ENCODE measurements at regions of chrX and their contacts with region 1.

Region 1: DNA sequence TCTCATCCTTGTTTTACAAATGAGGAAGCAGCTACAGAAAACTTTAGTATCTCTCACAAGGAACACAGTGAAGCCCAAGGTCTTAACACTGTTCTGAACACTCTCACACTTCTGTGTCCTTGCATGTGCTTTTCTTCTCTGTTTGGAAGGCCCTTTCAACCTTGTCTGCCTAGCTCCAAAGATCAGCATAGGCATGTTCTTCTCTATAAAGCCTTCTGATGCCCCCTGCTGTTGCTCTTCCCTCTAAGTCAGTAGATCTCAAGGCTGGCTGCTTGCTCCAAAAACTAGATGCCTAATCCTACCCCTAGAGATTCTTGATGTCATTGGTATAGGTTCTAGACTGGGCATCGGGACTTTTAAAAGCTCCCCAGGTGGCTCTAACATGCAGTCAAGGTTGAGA is 5.9 kb downstream of the APOO start:
- DNase-seq: no peak
- ATAC-seq: peak; percentile 87
- H3K4me3 Mint-ChIP-seq: no peak overlapping the region
- H3K27ac Mint-ChIP-seq: no peak overlapping the region
- H3K4me1 Mint-ChIP-seq: peaks cover 4% of the 10 kb centered on the region
- H3K27me3 Mint-ChIP-seq: no peaks in the 10 kb centered on the region
- CTCF ChIP-seq: no peak

Region 2: GRCh38 chrX:22135994-22136684 is 1765.7 kb before region 1 on chrX:
- CTCF ChIA-PET with region 1: interaction called, 6 read pairs
- POLR2A ChIA-PET with region 1: no interaction called
- intact Hi-C with region 1: loop called (anchors 2 kb)
- DNase-seq: no peak
- ATAC-seq: no peak
- H3K4me3 Mint-ChIP-seq: no peak overlapping the region
- H3K27ac Mint-ChIP-seq: no peak overlapping the region
- H3K4me1 Mint-ChIP-seq: peaks cover 4% of the 10 kb centered on the region
- H3K27me3 Mint-ChIP-seq: no peaks in the 10 kb centered on the region
- CTCF ChIP-seq: no peak

Region 3: DNA sequence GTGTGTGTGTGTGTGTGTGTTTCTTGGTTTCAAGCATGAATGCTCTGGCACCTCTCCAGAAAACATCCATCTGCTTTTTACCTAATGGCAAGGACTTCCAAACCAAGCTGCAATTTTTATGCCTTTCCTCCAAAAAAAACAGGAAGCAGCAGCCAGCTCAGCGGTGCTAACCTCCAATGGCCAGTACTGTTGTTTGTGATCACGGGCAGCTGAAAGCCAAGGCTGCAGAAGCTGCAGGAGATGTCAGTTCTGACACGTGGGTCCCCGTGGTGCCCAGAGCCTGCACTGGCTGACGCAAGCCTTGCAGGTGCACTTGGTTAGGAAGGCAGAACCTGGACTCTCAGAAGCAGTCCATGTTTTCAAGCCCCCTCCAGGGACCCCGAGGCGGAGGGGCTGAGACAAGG is 1215.7 kb before region 1 on chrX:
- CTCF ChIA-PET with region 1: no interaction called
- POLR2A ChIA-PET with region 1: no interaction called
- intact Hi-C with region 1: no loop called
- DNase-seq: no peak
- ATAC-seq: no peak
- H3K4me3 Mint-ChIP-seq: no peak overlapping the region
- H3K27ac Mint-ChIP-seq: no peak overlapping the region
- H3K4me1 Mint-ChIP-seq: peaks cover 8% of the 10 kb centered on the region
- H3K27me3 Mint-ChIP-seq: no peaks in the 10 kb centered on the region
- CTCF ChIP-seq: no peak

Region 4: DNA sequence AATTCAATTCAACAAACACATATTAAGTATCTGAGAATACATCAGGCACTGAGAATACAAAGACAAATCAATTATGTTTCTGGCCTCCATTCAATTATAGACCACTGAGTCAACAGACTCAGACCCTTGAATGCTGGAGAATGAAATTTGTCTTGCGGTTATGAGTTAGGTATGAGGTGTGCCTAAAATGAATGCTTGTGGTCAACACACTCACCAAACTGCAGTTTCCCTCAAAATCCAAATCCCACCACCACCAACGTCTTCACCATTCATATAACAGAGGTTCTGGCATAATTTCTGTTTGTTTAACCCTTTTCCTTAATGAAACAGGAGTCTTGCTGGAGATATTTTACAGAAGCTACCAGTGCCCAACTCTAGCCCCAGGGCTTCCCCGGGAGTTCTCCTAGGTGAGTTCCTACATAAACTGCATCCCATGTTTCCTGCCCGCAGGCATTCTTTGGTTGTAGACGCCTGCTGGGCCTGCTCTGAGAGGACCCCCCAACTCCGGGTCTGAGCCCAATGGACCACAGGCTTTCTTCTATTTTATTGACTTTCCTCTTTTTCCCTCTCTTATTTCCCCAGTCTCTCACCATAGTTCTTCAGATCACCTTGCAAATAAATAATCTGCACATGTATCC is 782.8 kb before region 1 on chrX:
- CTCF ChIA-PET with region 1: no interaction called
- POLR2A ChIA-PET with region 1: no interaction called
- intact Hi-C with region 1: no loop called
- DNase-seq: no peak
- ATAC-seq: no peak
- H3K4me3 Mint-ChIP-seq: no peak overlapping the region
- H3K27ac Mint-ChIP-seq: no peak overlapping the region
- H3K4me1 Mint-ChIP-seq: no peaks in the 10 kb centered on the region
- H3K27me3 Mint-ChIP-seq: no peaks in the 10 kb centered on the region
- CTCF ChIP-seq: no peak

Region 5: GRCh38 chrX:23525531-23525930 is 376.3 kb before region 1 on chrX:
- CTCF ChIA-PET with region 1: no interaction called
- POLR2A ChIA-PET with region 1: no interaction called
- intact Hi-C with region 1: no loop called
- DNase-seq: no peak
- ATAC-seq: no peak
- H3K4me3 Mint-ChIP-seq: no peak overlapping the region
- H3K27ac Mint-ChIP-seq: no peak overlapping the region
- H3K4me1 Mint-ChIP-seq: no peaks in the 10 kb centered on the region
- H3K27me3 Mint-ChIP-seq: no peaks in the 10 kb centered on the region
- CTCF ChIP-seq: no peak

Region 6: GRCh38 chrX:23694606-23695005 is 207.2 kb before region 1 on chrX:
- CTCF ChIA-PET with region 1: interaction called, 79 read pairs
- POLR2A ChIA-PET with region 1: interaction called, 6 read pairs
- intact Hi-C with region 1: loop called (anchors 1 kb)
- DNase-seq: no peak
- ATAC-seq: peak; percentile 78
- H3K4me3 Mint-ChIP-seq: no peak overlapping the region
- H3K27ac Mint-ChIP-seq: no peak overlapping the region
- H3K4me1 Mint-ChIP-seq: no peaks in the 10 kb centered on the region
- H3K27me3 Mint-ChIP-seq: no peaks in the 10 kb centered on the region
- CTCF ChIP-seq: no peak

Region 7: DNA sequence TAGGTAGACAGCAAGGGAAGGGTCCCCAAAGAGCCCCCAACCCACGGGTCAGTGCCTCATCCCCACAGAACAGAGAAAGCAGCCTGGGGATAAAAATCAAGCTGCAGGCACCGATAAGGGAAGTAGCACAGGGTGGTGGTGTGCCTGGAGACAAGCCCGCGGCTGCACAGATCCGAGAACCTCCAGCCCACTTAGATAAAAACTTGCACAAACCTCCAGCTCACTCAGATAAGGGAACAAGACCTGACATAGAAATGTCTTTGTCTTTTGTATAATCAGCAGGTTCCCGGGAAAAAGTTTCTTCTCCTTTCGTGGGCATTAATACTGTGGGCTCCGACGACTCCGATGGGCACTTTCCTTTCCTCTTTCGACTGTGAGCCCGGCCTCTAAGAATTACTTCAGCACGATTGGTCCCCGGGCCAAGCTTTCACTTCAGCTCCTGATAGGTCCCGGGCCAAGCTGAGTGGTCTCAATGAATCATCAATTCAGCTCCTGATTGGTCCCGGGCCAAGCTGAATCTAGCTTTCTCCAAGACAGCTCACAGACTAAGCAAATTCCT is 202.1 kb before region 1 on chrX:
- CTCF ChIA-PET with region 1: interaction called, 79 read pairs
- POLR2A ChIA-PET with region 1: interaction called, 6 read pairs
- intact Hi-C with region 1: loop called (anchors 1 kb)
- DNase-seq: peak; percentile 14
- ATAC-seq: peak; percentile 88
- H3K4me3 Mint-ChIP-seq: peak overlapping the region; percentile 81
- H3K27ac Mint-ChIP-seq: peak overlapping the region; percentile 56
- H3K4me1 Mint-ChIP-seq: peaks cover 3% of the 10 kb centered on the region
- H3K27me3 Mint-ChIP-seq: no peaks in the 10 kb centered on the region
- CTCF ChIP-seq: no peak

Region 8: GRCh38 chrX:23756157-23756559 is 145.6 kb before region 1 on chrX:
- CTCF ChIA-PET with region 1: interaction called, 19 read pairs
- POLR2A ChIA-PET with region 1: no interaction called
- intact Hi-C with region 1: loop called (anchors 1 kb)
- DNase-seq: peak; percentile 18
- ATAC-seq: peak; percentile 64
- H3K4me3 Mint-ChIP-seq: no peak overlapping the region
- H3K27ac Mint-ChIP-seq: peak overlapping the region; percentile 35
- H3K4me1 Mint-ChIP-seq: peaks cover 3% of the 10 kb centered on the region
- H3K27me3 Mint-ChIP-seq: no peaks in the 10 kb centered on the region
- CTCF ChIP-seq: peak; percentile 26